ENCODE measurements at regions of chr6 and their contacts with region 1.

Region 1: DNA sequence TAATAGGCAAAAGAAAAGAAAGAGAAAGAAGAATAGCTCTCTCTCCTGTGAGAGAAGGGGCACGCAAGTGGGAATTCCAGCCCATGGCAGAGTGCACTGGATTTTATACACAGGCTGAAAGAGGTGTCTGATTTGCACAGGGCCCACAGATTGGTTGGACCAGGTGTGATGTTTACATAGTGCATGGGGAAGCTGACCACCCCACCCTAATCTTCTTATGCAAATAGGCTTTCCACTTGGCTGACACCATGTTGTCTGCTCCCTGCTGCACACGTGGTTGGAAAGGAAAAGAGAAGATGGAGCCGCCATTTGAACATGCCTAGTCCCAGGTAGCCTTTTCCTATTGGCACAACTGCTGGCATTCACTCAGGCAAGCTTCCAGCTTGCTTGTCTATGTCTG is 20.2 kb downstream of the MICA start:
- DNase-seq: peak; percentile 45
- H3K4me3 ChIP-seq: no peak overlapping the region
- H3K27ac ChIP-seq: no peak overlapping the region
- H3K4me1 ChIP-seq: peaks cover 12% of the 10 kb centered on the region
- CTCF ChIP-seq: no peak

Region 2: GRCh38 chr6:31403283-31403989 is 20.1 kb before region 1 on chr6 and contains the start of gene MICA:
- CTCF ChIA-PET with region 1: no interaction called
- POLR2A ChIA-PET with region 1: no interaction called
- intact Hi-C with region 1: no loop called
- DNase-seq: peak; percentile 73
- H3K4me3 ChIP-seq: peak within 1 kb of the TSS; percentile 79
- H3K27ac ChIP-seq: peak within 1 kb of the TSS; percentile 50
- H3K4me1 ChIP-seq: peaks cover 25% of the 10 kb centered on the region
- CTCF ChIP-seq: no peak
- total RNA-seq, gene MICA: 11.9 and 15.3 TPM in 2 replicates

Region 3: DNA sequence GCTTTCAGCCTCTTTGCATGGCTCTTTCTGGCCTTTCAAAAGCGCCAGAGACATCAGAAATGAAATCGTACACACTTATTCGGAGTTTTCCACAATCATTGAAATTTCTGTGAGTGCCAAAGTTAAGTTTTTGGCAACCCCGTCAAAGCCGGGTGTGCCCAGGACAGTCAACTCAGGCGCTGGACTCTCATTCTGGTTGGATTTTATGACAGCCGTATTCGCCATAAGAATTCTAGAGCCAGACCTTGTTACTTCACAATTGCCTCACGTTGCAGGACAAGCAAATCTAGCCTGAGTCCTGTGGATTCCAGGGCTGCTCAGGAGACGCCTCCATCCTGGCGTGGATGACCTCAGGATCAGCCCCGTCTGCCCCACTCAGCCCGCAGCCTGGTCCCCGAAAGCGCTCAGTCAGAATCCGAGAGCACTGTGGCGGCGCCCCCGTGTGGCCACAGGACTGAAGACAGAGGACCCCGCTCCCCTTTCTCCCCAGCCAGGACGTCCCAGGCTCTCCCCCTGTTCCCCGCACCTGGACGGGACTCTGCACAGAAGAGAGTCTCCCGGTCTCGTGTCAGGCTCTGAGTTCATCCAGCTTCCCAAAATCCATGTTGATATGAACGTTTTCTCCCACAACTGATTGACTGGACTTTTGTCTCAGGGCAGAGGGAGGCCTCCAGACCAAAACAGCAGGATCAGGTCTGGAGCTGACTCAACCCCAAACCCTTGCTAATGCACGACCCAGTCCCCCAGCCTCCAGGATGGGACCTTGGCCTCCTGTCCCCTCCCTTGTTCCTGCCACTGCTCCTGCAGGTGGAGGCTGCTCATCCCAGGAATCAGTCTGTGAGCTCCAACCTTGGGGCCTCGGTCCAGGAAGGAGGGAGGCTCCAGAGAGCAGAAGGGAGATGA is 18.1 kb after region 1 on chr6:
- CTCF ChIA-PET with region 1: no interaction called
- POLR2A ChIA-PET with region 1: interaction called, 3 read pairs
- intact Hi-C with region 1: loop called (anchors 2 kb)
- DNase-seq: peak; percentile 78
- H3K4me3 ChIP-seq: no peak overlapping the region
- H3K27ac ChIP-seq: no peak overlapping the region
- H3K4me1 ChIP-seq: no peaks in the 10 kb centered on the region
- CTCF ChIP-seq: peak; percentile 95